ENCODE measurements at regions of chr19 and their contacts with region 1.

Region 1: DNA sequence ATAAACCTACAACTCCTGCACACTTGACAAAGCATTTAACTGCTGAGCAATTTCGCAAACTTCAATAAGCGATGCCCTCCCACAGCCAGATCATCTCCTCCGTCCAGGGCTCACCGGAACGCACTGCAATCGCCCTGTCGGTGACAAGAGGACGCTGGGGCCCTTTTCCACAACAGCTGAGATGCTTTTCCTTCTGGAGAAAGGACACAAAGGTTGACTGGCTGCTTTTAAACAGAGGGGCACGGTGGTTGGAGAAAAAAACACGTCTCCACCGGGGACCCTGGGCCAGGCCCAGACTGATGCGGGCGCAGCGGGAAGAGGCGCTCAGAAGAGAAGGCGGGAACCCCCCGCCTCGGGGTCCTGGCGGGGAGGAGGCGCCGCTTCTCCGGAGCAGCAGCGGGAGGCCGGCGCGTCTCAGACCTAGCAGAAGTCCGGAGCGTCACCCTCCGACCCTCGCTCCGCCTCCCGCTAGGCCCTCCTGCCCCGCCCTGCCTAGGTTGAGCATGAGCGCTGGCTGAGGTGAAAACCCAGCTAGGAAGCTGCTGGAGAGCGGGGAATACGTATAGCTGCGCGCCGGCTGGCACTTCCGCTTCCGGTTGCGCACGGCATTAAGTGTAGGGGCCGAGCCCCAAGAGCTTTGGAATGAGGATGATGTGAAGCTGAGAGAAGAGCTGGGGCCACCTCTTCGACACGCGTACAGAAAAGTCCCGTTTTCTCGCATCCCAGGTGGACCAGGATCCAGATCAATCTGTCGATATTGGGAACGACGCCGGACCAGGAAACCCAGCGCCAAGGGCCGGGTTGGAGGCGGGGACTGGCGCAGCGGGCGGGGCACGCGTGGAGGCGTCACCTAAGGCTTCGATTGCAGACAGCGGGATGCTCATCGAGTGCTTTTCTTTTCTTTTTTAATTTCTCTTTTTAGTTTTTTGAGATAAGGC is at the start of gene ZNF846:
- DNase-seq: peak; percentile 95
- ATAC-seq: peak; percentile 98 to 100
- total RNA-seq, gene ZNF846: 8.8 to 12.7 TPM

Region 2: DNA sequence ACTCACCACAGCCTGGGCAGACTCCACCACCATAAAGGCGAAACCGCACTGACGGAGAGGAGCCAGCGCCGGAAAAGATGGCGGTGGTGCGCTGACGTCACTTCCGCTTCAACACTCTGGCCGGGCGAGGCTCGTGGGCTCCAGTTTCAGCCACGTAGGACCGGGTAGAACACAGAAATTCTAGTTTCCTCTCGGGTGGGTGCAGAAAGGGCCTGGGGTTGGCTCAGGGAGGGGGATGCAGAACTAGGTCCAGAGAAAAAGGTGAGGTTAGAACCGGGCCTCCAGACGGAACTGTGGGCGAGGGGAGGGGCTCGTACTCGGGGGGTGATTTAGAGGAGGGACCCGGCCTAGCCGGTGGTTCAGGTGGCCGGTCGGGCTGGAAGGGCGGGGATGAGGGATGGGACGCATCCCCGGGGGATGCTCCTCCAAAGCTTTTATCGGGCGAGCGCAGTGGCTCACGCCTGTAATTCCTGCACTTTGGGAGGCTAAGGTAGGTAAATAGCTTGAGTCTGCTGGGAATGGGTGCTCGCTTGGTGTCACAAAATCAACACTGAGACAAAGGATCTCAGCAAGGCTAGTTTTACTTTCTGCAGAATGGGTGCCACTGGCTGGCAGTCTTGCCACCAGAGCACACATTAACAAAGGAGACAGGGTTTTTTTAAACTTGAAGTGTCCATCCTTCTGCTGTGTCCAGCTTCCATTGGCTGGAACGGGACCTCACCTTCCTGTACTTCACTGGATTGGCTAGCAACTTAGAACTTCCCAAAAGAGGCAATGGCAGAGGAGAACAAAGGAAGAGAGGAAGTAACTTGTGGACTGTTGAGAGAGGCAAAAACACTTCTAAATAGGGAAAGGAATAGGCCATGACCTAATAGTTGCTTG is 147.0 kb before region 1 on chr19 and contains the start of gene ZNF561:
- intact Hi-C with region 1: no loop called
- DNase-seq: peak; percentile 91
- ATAC-seq: peak; percentile 96 to 97
- total RNA-seq, gene ZNF561: 18.9 to 20.1 TPM

Region 3: GRCh38 chr19:9674663-9675357 is 93.6 kb before region 1 on chr19 and contains the start of gene ZNF562:
- intact Hi-C with region 1: loop called in 1 of 2 experiments (anchors 5 kb)
- DNase-seq: peak; percentile 92
- ATAC-seq: peak; percentile 98
- total RNA-seq, gene ZNF562: 21.8 to 27.5 TPM

Measured in left cardiac atrium (tissue), 4 donors.